Activated CD8-positive, alpha-beta T cell treated with anti-CD3 and anti-CD28 coated beads for 36 hours (primary cell): ENCODE measurements at regions of chr7 and their contacts with region 1.

Region 1: GRCh38 chr7:98021588-98022351 is 31.8 kb upstream of the OCM2 start:
- DNase-seq: peak; percentile 90
- ATAC-seq: peak; percentile 95
- H3K4me3 Mint-ChIP-seq: no peak overlapping the region
- H3K27ac Mint-ChIP-seq: no peak overlapping the region
- H3K4me1 Mint-ChIP-seq: peaks cover 4% of the 10 kb centered on the region
- H3K27me3 Mint-ChIP-seq: peaks cover 5% of the 10 kb centered on the region
- CTCF ChIP-seq: peak; percentile 90

Region 2: DNA sequence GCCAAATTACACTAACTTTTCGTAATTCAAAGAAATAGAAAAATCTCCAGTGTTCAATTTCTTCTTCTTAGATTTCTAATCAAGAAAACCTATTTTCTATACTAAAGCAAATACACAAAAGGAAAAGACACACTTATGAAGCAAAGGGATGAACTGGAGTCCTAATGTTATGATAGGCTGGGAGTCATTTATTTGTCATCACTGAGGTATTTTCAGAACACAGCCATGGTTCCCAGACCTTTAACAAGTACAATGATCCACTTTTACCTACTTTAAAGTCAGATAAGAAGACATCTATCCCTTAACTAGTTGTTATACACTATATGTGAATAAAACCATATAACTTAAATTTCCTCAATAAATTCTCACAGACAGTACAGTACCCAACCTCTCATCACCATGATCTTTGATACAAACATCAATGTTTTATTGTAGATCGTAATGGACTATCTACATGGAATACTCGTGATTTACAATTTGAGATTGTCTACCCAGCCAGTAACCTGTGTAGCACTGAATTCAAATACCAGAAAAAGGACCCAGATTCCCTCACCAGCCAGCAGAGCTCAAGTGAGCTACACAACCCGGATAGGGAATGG is 162.1 kb before region 1 on chr7:
- CTCF ChIA-PET with region 1: no interaction called
- POLR2A ChIA-PET with region 1: no interaction called
- intact Hi-C with region 1: no loop called
- DNase-seq: no peak
- ATAC-seq: no peak
- H3K4me3 Mint-ChIP-seq: no peak overlapping the region
- H3K27ac Mint-ChIP-seq: no peak overlapping the region
- H3K4me1 Mint-ChIP-seq: peaks cover 8% of the 10 kb centered on the region
- H3K27me3 Mint-ChIP-seq: no peaks in the 10 kb centered on the region
- CTCF ChIP-seq: no peak

Region 3: GRCh38 chr7:98079891-98080648 is 58.3 kb after region 1 on chr7:
- CTCF ChIA-PET with region 1: interaction called, 11 read pairs
- POLR2A ChIA-PET with region 1: no interaction called
- intact Hi-C with region 1: loop called (anchors 10 kb)
- DNase-seq: no peak
- ATAC-seq: no peak
- H3K4me3 Mint-ChIP-seq: no peak overlapping the region
- H3K27ac Mint-ChIP-seq: no peak overlapping the region
- H3K4me1 Mint-ChIP-seq: no peaks in the 10 kb centered on the region
- H3K27me3 Mint-ChIP-seq: peaks cover 5% of the 10 kb centered on the region
- CTCF ChIP-seq: no peak

Region 4: GRCh38 chr7:98106647-98107445 is 85.1 kb after region 1 on chr7 and contains the start of gene LMTK2:
- CTCF ChIA-PET with region 1: interaction called, 19 read pairs
- POLR2A ChIA-PET with region 1: no interaction called
- intact Hi-C with region 1: no loop called
- DNase-seq: peak; percentile 97
- ATAC-seq: peak; percentile 100
- H3K4me3 Mint-ChIP-seq: peak within 1 kb of the TSS; percentile 96
- H3K27ac Mint-ChIP-seq: peak within 1 kb of the TSS; percentile 90
- H3K4me1 Mint-ChIP-seq: peaks cover 36% of the 10 kb centered on the region
- H3K27me3 Mint-ChIP-seq: peaks cover 6% of the 10 kb centered on the region
- CTCF ChIP-seq: peak; percentile 79
- total RNA-seq, gene LMTK2: 9.4 to 11.5 TPM

Region 5: GRCh38 chr7:98168181-98168905 is 146.6 kb after region 1 on chr7:
- CTCF ChIA-PET with region 1: interaction called, 239 read pairs
- POLR2A ChIA-PET with region 1: no interaction called
- intact Hi-C with region 1: loop called (anchors 2 kb)
- DNase-seq: peak; percentile 51
- ATAC-seq: peak; percentile 48
- H3K4me3 Mint-ChIP-seq: no peak overlapping the region
- H3K27ac Mint-ChIP-seq: no peak overlapping the region
- H3K4me1 Mint-ChIP-seq: peaks cover 3% of the 10 kb centered on the region
- H3K27me3 Mint-ChIP-seq: no peaks in the 10 kb centered on the region
- CTCF ChIP-seq: peak; percentile 81